CD4-positive, alpha-beta memory T cell (primary cell): ENCODE measurements at regions of chr2 and their contacts with region 1.

Region 1: GRCh38 chr2:218319813-218320365 is 27.6 kb upstream of the TMBIM1 start:
- DNase-seq: no peak
- H3K4me3 ChIP-seq: no peak overlapping the region
- H3K4me3 Mint-ChIP-seq: peak overlapping the region in 1 of 8 donors; percentile 46
- H3K27ac ChIP-seq: no peak overlapping the region
- H3K27ac Mint-ChIP-seq: peak overlapping the region in 2 of 7 donors; percentile 8 to 80
- H3K4me1 ChIP-seq: peaks cover 48% of the 10 kb centered on the region
- H3K4me1 Mint-ChIP-seq: peaks cover 33 to 69% (median 50%) of the 10 kb centered on the region in 4 donors
- H3K27me3 ChIP-seq: no peaks in the 10 kb centered on the region
- H3K27me3 Mint-ChIP-seq: no peaks in the 10 kb centered on the region

Region 2: GRCh38 chr2:217964275-217965161 is 355.4 kb before region 1 on chr2:
- CTCF ChIA-PET with region 1: no interaction called
- POLR2A ChIA-PET with region 1: no interaction called
- intact Hi-C with region 1: no loop called
- DNase-seq: no peak
- H3K4me3 ChIP-seq: no peak overlapping the region
- H3K4me3 Mint-ChIP-seq: no peak overlapping the region
- H3K27ac ChIP-seq: no peak overlapping the region
- H3K27ac Mint-ChIP-seq: no peak overlapping the region
- H3K4me1 ChIP-seq: no peaks in the 10 kb centered on the region
- H3K4me1 Mint-ChIP-seq: no peaks in the 10 kb centered on the region
- H3K27me3 ChIP-seq: no peaks in the 10 kb centered on the region
- H3K27me3 Mint-ChIP-seq: peaks cover 1 to 9% of the 10 kb centered on the region in 2 donors

Region 3: DNA sequence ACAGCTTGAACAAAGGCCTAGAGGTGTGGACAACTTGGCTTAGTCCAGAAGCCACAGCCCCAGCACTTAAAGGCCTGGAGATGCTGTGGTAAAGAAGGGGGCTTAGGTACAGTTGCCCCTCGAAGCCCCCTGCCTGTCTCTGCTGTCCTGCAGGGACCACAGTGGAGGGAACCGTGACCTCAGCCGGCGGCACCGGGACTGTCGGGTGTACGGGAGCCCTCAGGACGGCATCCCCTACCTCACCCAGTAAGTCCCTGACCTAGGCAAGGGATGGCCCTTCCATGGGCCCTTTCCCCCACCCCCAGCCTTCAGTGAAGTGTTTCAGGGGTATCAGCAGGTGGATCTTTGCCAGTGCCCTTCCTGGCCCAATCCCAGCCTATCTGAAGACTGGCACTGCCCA is 21.5 kb after region 1 on chr2:
- CTCF ChIA-PET with region 1: no interaction called
- POLR2A ChIA-PET with region 1: no interaction called
- intact Hi-C with region 1: no loop called
- DNase-seq: no peak
- H3K4me3 ChIP-seq: no peak overlapping the region
- H3K4me3 Mint-ChIP-seq: no peak overlapping the region
- H3K27ac ChIP-seq: no peak overlapping the region
- H3K27ac Mint-ChIP-seq: no peak overlapping the region
- H3K4me1 ChIP-seq: no peaks in the 10 kb centered on the region
- H3K4me1 Mint-ChIP-seq: peaks cover 0 to 2% (median 0%) of the 10 kb centered on the region in 4 donors
- H3K27me3 ChIP-seq: no peaks in the 10 kb centered on the region
- H3K27me3 Mint-ChIP-seq: peaks cover 0 to 2% of the 10 kb centered on the region in 2 donors

Region 4: GRCh38 chr2:218367415-218368153 is 47.7 kb after region 1 on chr2:
- CTCF ChIA-PET with region 1: interaction called, 3 read pairs
- POLR2A ChIA-PET with region 1: no interaction called
- intact Hi-C with region 1: loop called (anchors 5 kb)
- DNase-seq: peak; percentile 64 to 74 (median 71)
- H3K4me3 ChIP-seq: peak overlapping the region; percentile 42 to 60
- H3K4me3 Mint-ChIP-seq: peak overlapping the region; percentile 74 to 89 (median 82)
- H3K27ac ChIP-seq: peak overlapping the region; percentile 42
- H3K27ac Mint-ChIP-seq: peak overlapping the region; percentile 84 to 96 (median 90)
- H3K4me1 ChIP-seq: peaks cover 28% of the 10 kb centered on the region
- H3K4me1 Mint-ChIP-seq: peaks cover 13 to 33% (median 25%) of the 10 kb centered on the region in 4 donors
- H3K27me3 ChIP-seq: no peaks in the 10 kb centered on the region
- H3K27me3 Mint-ChIP-seq: no peaks in the 10 kb centered on the region